ENCODE measurements at regions of chr21 and their contacts with region 1.

Region 1: DNA sequence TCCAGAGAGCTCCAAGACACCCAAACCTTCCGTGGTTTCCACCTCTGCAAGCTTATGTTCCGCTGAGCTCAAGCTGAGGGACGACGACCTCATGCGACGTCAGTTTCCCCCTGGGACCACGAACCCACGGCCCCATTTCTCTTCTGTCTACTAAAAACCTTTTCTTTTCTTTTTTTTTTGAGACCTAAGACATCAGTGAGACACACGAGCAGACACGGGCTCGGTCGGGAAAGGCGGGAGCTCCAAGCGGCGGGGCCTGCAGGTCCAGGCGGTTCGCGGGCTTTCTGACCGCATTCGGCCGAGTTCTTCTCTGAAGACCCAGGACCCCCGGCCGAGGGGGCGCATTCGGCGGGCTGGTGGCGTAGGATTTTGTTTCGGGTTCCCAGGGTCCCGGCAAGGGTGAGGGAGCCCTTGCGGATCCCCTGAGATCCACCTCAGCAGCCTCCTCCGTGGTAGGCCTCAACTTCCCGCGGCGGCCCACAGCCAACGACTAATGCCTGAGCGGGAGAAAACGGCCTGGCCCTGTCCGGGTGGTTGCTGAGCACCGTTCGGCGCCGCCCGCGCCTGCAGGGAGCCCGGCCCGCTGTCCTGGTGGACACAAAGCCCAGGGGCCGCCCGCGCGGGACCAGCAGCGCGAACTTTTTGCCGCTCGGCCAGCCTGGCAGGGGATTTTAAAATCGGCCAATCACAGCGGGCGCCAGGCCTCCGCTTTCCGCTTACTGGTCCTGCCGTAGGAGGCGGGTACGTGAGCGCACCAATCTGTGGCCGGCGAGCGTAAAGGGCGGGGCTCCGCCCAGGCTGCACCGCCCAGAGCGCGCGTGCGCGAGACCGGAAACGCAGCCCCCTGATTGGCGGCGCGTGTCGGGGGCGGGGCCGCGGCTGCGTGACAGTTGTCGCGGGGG is at the start of gene C21orf58:
- DNase-seq: peak; percentile 93
- ATAC-seq: peak; percentile 83
- H3K4me3 ChIP-seq: peak within 1 kb of the TSS; percentile 89 to 93
- H3K27ac ChIP-seq: peak within 1 kb of the TSS; percentile 96
- H3K4me1 ChIP-seq: peaks cover 20 to 32% of the 10 kb centered on the region in 2 experiments
- H3K27me3 ChIP-seq: no peaks in the 10 kb centered on the region
- CTCF ChIP-seq: no peak
- POLR2A ChIP-seq: peak; percentile 44
- RAD21 ChIP-seq: no peak
- total RNA-seq, gene C21orf58: 10.8 TPM

Region 2: DNA sequence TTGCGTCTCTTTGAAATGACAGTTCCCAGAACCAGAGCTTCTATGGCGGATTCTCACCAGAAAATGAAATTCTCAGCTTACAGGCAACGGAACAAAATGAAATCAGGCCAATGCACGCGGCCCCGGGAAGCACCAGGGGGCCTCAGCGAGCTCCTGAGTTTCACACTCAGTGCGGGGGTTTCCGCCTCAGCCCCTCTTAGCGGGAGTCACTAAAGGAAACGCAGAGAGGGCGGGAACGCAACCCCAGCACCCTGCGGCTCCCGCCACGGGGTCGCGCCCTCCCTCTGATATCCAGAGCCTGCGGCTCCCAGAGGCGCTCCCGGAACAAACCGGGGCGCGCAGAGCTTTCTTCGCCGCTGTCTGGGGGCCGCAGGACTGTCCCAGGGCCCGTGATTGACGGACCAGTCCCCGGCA is 349.8 kb before region 1 on chr21:
- CTCF ChIA-PET with region 1: no interaction called
- POLR2A ChIA-PET with region 1: no interaction called
- RAD21 ChIA-PET with region 1: no interaction called
- intact Hi-C with region 1: loop called (anchors 10 kb)
- DNase-seq: peak; percentile 35
- ATAC-seq: peak; percentile 52
- H3K4me3 ChIP-seq: peak overlapping the region; percentile 47 to 60
- H3K27ac ChIP-seq: peak overlapping the region; percentile 93
- H3K4me1 ChIP-seq: peaks cover 23 to 37% of the 10 kb centered on the region in 2 experiments
- H3K27me3 ChIP-seq: no peaks in the 10 kb centered on the region
- CTCF ChIP-seq: peak in 2 of 3 experiments; percentile 70 to 76; a peak in 4 of 6 replicates
- POLR2A ChIP-seq: no peak
- RAD21 ChIP-seq: no peak

Region 3: GRCh38 chr21:46060596-46061061 is 262.8 kb before region 1 on chr21:
- CTCF ChIA-PET with region 1: no interaction called
- POLR2A ChIA-PET with region 1: no interaction called
- RAD21 ChIA-PET with region 1: no interaction called
- intact Hi-C with region 1: no loop called
- DNase-seq: no peak
- ATAC-seq: no peak
- H3K4me3 ChIP-seq: no peak overlapping the region
- H3K27ac ChIP-seq: no peak overlapping the region
- H3K4me1 ChIP-seq: no peaks in the 10 kb centered on the region
- H3K27me3 ChIP-seq: no peaks in the 10 kb centered on the region
- CTCF ChIP-seq: no peak
- POLR2A ChIP-seq: no peak
- RAD21 ChIP-seq: no peak

Region 4: GRCh38 chr21:46228345-46229051 is 95.0 kb before region 1 on chr21 and contains the start of gene LSS:
- CTCF ChIA-PET with region 1: interaction called, 3 read pairs
- POLR2A ChIA-PET with region 1: no interaction called
- RAD21 ChIA-PET with region 1: no interaction called
- intact Hi-C with region 1: loop called (anchors 2 kb)
- DNase-seq: peak; percentile 93
- ATAC-seq: peak; percentile 97
- H3K4me3 ChIP-seq: peak within 1 kb of the TSS; percentile 68 to 76
- H3K27ac ChIP-seq: peak within 1 kb of the TSS; percentile 67; the same call in 1 of the 2 replicates
- H3K4me1 ChIP-seq: peaks cover 15 to 29% of the 10 kb centered on the region in 2 experiments
- H3K27me3 ChIP-seq: no peaks in the 10 kb centered on the region
- CTCF ChIP-seq: no peak
- POLR2A ChIP-seq: peak; percentile 19
- RAD21 ChIP-seq: no peak
- total RNA-seq, gene LSS: 44.7 TPM

Region 5: GRCh38 chr21:46285761-46286496 is 37.5 kb before region 1 on chr21 and contains the start of gene YBEY:
- CTCF ChIA-PET with region 1: no interaction called
- POLR2A ChIA-PET with region 1: no interaction called
- RAD21 ChIA-PET with region 1: no interaction called
- intact Hi-C with region 1: loop called (anchors 2 kb)
- DNase-seq: peak; percentile 81
- ATAC-seq: peak; percentile 95
- H3K4me3 ChIP-seq: peak within 1 kb of the TSS; percentile 72 to 100
- H3K27ac ChIP-seq: peak within 1 kb of the TSS; percentile 95
- H3K4me1 ChIP-seq: peaks cover 11 to 17% of the 10 kb centered on the region in 2 experiments
- H3K27me3 ChIP-seq: no peaks in the 10 kb centered on the region
- CTCF ChIP-seq: peak in 2 of 3 experiments; percentile 24 to 34; a peak in 2 of 6 replicates
- POLR2A ChIP-seq: no peak
- RAD21 ChIP-seq: peak; percentile 26
- total RNA-seq, gene YBEY: 31.5 TPM

Region 6: GRCh38 chr21:46347791-46348381 is 24.4 kb after region 1 on chr21:
- CTCF ChIA-PET with region 1: no interaction called
- POLR2A ChIA-PET with region 1: no interaction called
- RAD21 ChIA-PET with region 1: no interaction called
- intact Hi-C with region 1: no loop called
- DNase-seq: no peak
- ATAC-seq: no peak
- H3K4me3 ChIP-seq: no peak overlapping the region
- H3K27ac ChIP-seq: no peak overlapping the region
- H3K4me1 ChIP-seq: no peaks in the 10 kb centered on the region
- H3K27me3 ChIP-seq: no peaks in the 10 kb centered on the region
- CTCF ChIP-seq: no peak
- POLR2A ChIP-seq: no peak
- RAD21 ChIP-seq: no peak

Region 7: DNA sequence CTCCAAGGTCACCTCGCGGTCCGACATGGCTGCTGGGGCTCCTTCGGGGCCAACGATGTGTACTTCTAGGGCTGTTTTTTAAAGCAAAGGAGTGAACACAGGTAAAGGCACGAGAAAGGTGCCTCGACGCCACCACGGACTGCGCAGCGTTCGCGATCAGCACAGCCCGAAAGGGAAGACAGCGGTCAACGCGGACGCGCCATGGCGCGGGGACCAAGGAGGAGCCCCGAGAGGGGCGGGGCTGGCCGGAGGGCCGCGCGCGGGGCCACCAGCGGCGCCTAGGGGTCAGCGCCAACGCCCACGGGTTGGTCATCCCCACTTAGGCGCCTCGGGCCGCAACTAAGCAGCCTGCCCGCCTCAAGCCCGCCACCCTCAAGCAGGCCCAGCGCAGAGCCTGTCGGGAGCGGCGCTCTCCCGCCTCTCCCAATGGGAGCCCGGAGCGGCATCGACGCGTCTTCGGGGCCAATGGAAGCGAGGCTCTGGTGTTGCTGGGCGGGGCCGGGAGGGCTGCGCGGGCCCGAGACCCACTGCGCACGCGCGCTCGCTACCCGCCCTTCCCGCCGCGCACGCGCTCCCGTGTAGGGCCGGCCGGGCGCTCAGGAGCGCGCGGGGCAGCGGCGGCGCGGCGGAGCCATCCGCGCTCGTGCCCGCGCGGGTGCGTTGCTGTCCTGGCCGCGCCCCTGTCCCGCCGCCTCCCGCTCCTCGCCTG is 135.0 kb after region 1 on chr21 and contains the start of gene DIP2A:
- CTCF ChIA-PET with region 1: no interaction called
- POLR2A ChIA-PET with region 1: no interaction called
- RAD21 ChIA-PET with region 1: no interaction called
- intact Hi-C with region 1: loop called (anchors 5 kb)
- DNase-seq: peak; percentile 91
- ATAC-seq: peak; percentile 97
- H3K4me3 ChIP-seq: peak within 1 kb of the TSS; percentile 74 to 82
- H3K27ac ChIP-seq: peak within 1 kb of the TSS; percentile 95
- H3K4me1 ChIP-seq: peaks cover 26 to 40% of the 10 kb centered on the region in 2 experiments
- H3K27me3 ChIP-seq: no peaks in the 10 kb centered on the region
- CTCF ChIP-seq: no peak
- POLR2A ChIP-seq: peak; percentile 85
- RAD21 ChIP-seq: no peak
- total RNA-seq, gene DIP2A: 39.9 TPM